ENCODE measurements at regions of chr9 and their contacts with region 1.

Region 1: GRCh38 chr9:35603987-35604577 is 980 bp upstream of the TESK1 start:
- DNase-seq: peak; percentile 98
- ATAC-seq: peak; percentile 93
- H3K4me3 ChIP-seq: peak overlapping the region; percentile 76 to 99
- H3K27ac ChIP-seq: peak overlapping the region; percentile 100
- H3K4me1 ChIP-seq: peaks cover 20% of the 10 kb centered on the region
- H3K27me3 ChIP-seq: no peaks in the 10 kb centered on the region
- CTCF ChIP-seq: no peak

Region 2: DNA sequence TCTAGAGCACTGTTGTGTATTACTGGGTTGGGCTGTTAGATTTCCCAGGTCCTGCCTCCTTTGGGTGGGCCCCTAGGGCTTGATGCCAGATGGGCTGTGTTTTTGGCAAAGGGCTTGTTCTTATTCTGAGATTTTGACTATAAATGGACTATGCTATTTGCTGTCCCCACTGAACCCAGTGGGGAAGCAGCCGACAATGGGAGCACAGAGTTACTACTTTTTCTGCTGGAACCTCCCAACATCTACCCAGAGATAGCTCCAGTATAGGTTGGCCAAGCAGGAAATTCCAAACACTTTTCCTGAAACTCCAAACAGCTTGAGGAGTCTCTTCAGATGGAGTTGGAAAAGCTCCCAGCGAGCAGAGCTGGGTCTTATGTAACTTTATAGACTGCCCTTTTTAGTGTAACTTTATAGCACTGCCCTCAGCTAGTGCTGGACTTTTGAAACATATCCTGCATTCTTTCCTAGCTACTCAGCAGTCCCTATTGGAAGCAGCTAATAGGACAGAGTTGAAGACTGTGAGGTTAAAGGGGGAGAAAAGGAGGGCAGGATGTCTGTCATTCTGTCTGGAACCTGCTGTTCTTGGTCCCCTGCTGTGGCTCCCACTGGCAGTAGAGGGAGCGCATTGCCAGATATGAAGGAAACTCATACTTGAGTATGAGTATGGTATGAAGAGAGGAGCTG is 93.2 kb before region 1 on chr9:
- CTCF ChIA-PET with region 1: no interaction called
- POLR2A ChIA-PET with region 1: no interaction called
- in situ Hi-C with region 1: no loop called
- intact Hi-C with region 1: loop called (anchors 10 kb)
- DNase-seq: no peak
- ATAC-seq: peak; percentile 94
- H3K4me3 ChIP-seq: peak overlapping the region in 1 of 2 experiments; percentile 25; a peak in 2 of 4 replicates
- H3K27ac ChIP-seq: peak overlapping the region; percentile 96
- H3K4me1 ChIP-seq: peaks cover 80% of the 10 kb centered on the region
- H3K27me3 ChIP-seq: no peaks in the 10 kb centered on the region
- CTCF ChIP-seq: peak; percentile 76

Region 3: GRCh38 chr9:35566417-35566816 is 37.7 kb before region 1 on chr9:
- CTCF ChIA-PET with region 1: interaction called, 3 read pairs
- POLR2A ChIA-PET with region 1: no interaction called
- in situ Hi-C with region 1: no loop called
- intact Hi-C with region 1: loop called (anchors 5 kb)
- DNase-seq: no peak
- ATAC-seq: peak; percentile 47; the same call in 1 of the 2 replicates
- H3K4me3 ChIP-seq: no peak overlapping the region
- H3K27ac ChIP-seq: no peak overlapping the region
- H3K4me1 ChIP-seq: peaks cover 4% of the 10 kb centered on the region
- H3K27me3 ChIP-seq: no peaks in the 10 kb centered on the region
- CTCF ChIP-seq: no peak

Region 4: DNA sequence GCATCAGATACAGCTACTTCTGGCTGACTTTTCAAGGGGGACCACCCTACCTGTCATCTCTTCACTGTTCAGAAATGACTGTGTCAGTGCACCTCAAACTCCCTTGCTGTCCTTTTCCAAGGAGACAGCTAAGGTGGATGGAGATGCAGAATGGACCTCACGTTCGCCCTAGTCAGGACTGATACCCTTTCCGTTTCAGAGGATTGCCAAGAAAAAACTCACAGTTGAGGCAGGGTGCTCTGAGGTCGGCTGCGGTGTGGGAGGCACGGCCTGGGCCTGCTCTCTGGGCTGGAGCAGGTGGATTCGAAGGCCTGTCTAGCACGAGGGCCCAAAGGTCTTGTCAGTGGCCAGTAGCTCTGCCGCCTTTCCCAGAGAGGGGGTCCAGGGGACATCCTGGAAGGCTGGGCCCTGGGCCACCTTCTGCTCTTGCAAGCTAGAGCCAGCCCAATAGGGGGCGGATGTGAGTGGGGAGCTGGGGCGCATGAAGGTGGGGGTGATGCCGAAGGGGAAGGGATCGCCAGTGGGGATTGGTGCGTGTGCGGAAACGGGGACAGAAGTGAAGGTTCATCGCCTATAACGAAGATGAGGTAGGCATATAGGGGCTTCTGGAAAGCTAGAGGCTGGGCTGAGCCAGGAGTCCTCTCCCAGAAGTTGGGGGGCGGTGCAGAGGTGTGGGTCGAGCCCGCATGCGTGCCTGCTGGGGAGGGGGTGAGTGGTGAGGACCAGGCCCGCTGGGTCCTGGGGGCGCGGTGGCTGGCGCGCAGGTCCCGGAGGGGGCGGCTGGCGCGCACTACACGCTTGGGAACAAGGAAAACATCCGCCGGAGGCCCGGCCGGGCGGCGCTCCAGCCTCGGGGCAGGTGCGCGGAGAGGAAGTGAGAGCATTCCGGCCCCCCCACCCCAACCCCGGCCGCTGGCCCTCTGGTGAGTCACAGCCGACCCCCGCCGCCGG is 152.5 kb after region 1 on chr9:
- CTCF ChIA-PET with region 1: interaction called, 10 read pairs
- POLR2A ChIA-PET with region 1: no interaction called
- in situ Hi-C with region 1: no loop called
- intact Hi-C with region 1: no loop called
- DNase-seq: no peak
- ATAC-seq: peak; percentile 87
- H3K4me3 ChIP-seq: peak overlapping the region; percentile 75 to 92
- H3K27ac ChIP-seq: peak overlapping the region; percentile 88
- H3K4me1 ChIP-seq: peaks cover 22% of the 10 kb centered on the region
- H3K27me3 ChIP-seq: no peaks in the 10 kb centered on the region
- CTCF ChIP-seq: no peak

Measured in Panc1 (cell line).